Dendritic cell treated with granulocyte-macrophage colony-stimulating factor and Interleukin-4, amounts not matched to agents 40 ng/mL and 50 ng/mL, for 4 days (primary cell): ENCODE measurements at regions of chr5 and their contacts with region 1.

Region 1: GRCh38 chr5:10355071-10355889 is 1.8 kb downstream of the MARCHF6 start:
- H3K4me3 Mint-ChIP-seq: peak overlapping the region; percentile 100
- H3K27ac Mint-ChIP-seq: peak overlapping the region; percentile 98
- H3K4me1 Mint-ChIP-seq: peaks cover 20% of the 10 kb centered on the region
- H3K27me3 Mint-ChIP-seq: no peaks in the 10 kb centered on the region

Region 2: DNA sequence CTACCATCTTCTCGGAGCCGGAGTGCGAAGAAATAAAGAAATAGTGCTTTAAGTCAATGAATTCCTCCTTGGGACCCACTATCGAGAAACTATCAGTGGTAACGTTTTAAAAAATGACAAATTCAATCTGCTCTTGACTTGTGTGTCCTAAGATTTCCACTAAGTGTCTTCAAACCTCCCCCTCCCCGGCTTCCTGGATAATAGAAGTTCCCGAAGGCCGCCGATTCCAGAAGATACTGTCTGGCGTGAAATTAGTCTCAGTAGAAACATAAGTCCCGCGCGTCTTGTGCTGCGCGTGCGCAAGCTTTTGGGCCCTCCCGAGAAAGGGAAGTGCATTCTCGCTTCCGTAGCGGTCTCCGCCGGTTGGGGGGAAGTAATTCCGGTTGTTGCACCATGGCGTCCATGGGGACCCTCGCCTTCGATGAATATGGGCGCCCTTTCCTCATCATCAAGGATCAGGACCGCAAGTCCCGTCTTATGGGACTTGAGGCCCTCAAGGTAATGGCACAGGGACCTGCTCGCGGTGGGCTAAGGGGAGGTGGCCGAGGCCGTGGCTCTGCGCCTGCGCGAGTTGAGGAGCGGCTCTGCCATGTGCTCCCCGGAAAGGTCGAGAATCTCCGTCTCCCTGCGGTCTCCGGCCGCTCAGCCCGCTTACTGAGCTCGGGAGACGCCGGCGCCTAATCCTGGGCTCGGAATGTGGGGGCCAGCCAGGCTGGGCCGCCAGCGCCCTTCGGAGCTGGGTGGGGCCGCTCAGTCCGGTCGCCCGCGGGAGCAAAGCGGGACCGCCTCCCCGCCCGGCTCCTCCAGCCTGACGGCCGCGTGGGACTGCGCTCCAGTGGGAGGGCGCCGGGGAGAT is 105.1 kb before region 1 on chr5 and contains the start of gene CCT5:
- intact Hi-C with region 1: loop called (anchors 5 kb)
- H3K4me3 Mint-ChIP-seq: peak within 1 kb of the TSS; percentile 93
- H3K27ac Mint-ChIP-seq: peak within 1 kb of the TSS; percentile 98
- H3K4me1 Mint-ChIP-seq: peaks cover 38% of the 10 kb centered on the region
- H3K27me3 Mint-ChIP-seq: no peaks in the 10 kb centered on the region

Region 3: DNA sequence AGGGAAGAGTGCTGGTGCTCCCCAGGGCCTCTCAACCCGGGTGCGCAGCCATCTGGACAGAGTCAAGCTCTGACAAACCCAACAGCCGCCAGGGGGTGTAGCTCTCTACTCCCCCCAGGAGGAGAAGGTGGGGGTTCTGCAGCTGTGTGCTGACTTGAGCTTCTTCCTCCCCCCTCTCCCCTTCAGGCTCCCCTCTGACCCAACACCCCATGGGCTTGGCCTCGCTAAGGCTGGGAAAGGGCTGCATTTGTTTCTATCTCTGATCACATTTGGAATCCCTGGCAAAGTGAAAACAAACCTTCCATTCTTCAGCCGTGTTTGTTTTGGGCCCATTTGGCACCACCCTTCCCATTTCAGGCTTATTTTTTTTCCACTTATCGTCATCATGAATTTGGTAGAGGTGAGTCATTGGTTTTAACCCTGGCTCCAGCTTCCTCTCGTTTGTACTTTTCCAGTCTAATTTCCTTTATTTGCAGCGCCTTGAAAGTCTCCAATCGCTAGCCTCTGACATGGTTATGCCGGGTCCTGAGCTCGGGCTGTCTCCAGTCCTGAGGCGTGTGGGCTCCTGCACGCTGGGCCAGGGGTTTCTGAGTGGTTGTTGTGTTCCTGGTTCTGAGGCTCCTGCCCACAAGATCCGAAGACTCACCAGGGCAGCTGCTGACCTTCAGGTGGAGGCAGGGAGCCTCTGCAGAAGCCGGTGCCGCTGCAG is 369.7 kb after region 1 on chr5:
- intact Hi-C with region 1: no loop called
- H3K4me3 Mint-ChIP-seq: no peak overlapping the region
- H3K27ac Mint-ChIP-seq: peak overlapping the region; percentile 59
- H3K4me1 Mint-ChIP-seq: peaks cover 77% of the 10 kb centered on the region
- H3K27me3 Mint-ChIP-seq: no peaks in the 10 kb centered on the region